Activated CD8-positive, alpha-beta memory T cell treated with anti-CD3 and anti-CD28 coated beads, Interleukin-2, amount 10 ng/mL, durations not matched to agents 7 days and 5 days (primary cell): ENCODE measurements at regions of chr2 and their contacts with region 1.

Region 1: GRCh38 chr2:196076778-196077568 is 8.3 kb upstream of the DNAH7 start:
- DNase-seq: no peak
- ATAC-seq: peak; percentile 35
- H3K4me3 Mint-ChIP-seq: no peak overlapping the region
- H3K27ac Mint-ChIP-seq: no peak overlapping the region
- H3K4me1 Mint-ChIP-seq: peaks cover 34% of the 10 kb centered on the region
- H3K27me3 Mint-ChIP-seq: no peaks in the 10 kb centered on the region

Region 2: DNA sequence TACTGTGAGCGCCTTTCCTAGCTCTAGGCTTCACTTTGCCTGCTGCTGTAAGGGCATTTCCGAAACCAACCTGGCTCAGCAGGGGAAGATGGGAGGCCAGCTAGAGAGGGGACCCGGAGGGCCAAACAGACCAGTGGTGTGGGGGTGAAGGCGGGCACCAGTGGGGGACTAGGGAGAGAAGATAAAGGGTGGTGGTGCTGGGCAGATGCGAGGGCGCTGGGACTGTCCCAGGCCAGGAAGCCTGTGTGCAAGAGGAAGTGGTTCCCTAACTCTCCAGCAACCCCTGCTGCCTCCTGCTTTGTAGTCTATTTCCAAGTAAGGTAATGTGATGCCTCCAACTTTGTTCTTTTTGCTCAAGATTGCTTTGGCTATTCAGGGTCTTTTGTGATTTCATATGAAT is 81.5 kb before region 1 on chr2:
- CTCF ChIA-PET with region 1: no interaction called
- DNase-seq: no peak
- ATAC-seq: no peak
- H3K4me3 Mint-ChIP-seq: no peak overlapping the region
- H3K27ac Mint-ChIP-seq: no peak overlapping the region
- H3K4me1 Mint-ChIP-seq: no peaks in the 10 kb centered on the region
- H3K27me3 Mint-ChIP-seq: peaks cover 3% of the 10 kb centered on the region

Region 3: GRCh38 chr2:196143730-196144131 is 66.8 kb after region 1 on chr2:
- CTCF ChIA-PET with region 1: interaction called, 11 read pairs
- DNase-seq: no peak
- ATAC-seq: peak; percentile 21
- H3K4me3 Mint-ChIP-seq: peak overlapping the region; percentile 11
- H3K27ac Mint-ChIP-seq: peak overlapping the region; percentile 71
- H3K4me1 Mint-ChIP-seq: peaks cover 61% of the 10 kb centered on the region
- H3K27me3 Mint-ChIP-seq: no peaks in the 10 kb centered on the region

Region 4: GRCh38 chr2:196268538-196269338 is 191.8 kb after region 1 on chr2:
- CTCF ChIA-PET with region 1: interaction called, 18 read pairs
- DNase-seq: no peak
- ATAC-seq: peak; percentile 46
- H3K4me3 Mint-ChIP-seq: peak overlapping the region; percentile 63
- H3K27ac Mint-ChIP-seq: peak overlapping the region; percentile 85
- H3K4me1 Mint-ChIP-seq: peaks cover 67% of the 10 kb centered on the region
- H3K27me3 Mint-ChIP-seq: no peaks in the 10 kb centered on the region

Region 5: DNA sequence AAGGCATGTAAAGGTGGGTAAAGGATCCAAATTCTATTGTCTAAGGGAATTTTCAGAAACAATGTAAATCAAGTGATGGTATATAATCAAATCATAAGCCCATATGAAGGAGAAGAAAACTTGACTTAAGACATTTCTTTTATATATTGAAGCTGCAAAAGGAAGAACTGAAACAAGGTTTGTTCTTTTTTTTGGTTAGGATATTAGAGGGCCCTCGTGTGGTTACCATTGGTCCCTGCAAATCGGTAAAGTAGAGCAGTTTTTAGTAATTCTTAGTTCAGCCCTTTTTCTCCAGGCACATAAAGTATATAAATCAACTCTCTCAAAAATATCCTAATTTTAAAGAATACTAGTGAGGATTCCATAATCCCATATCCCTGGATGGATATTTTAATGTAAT is 200.0 kb after region 1 on chr2:
- CTCF ChIA-PET with region 1: interaction called, 26 read pairs
- DNase-seq: no peak
- ATAC-seq: peak; percentile 31
- H3K4me3 Mint-ChIP-seq: peak overlapping the region; percentile 11
- H3K27ac Mint-ChIP-seq: peak overlapping the region; percentile 52
- H3K4me1 Mint-ChIP-seq: peaks cover 42% of the 10 kb centered on the region
- H3K27me3 Mint-ChIP-seq: no peaks in the 10 kb centered on the region

Region 6: GRCh38 chr2:196291873-196292800 is 215.2 kb after region 1 on chr2:
- CTCF ChIA-PET with region 1: interaction called, 18 read pairs
- DNase-seq: no peak
- ATAC-seq: peak; percentile 34
- H3K4me3 Mint-ChIP-seq: no peak overlapping the region
- H3K27ac Mint-ChIP-seq: peak overlapping the region; percentile 29
- H3K4me1 Mint-ChIP-seq: peaks cover 55% of the 10 kb centered on the region
- H3K27me3 Mint-ChIP-seq: no peaks in the 10 kb centered on the region

Region 7: DNA sequence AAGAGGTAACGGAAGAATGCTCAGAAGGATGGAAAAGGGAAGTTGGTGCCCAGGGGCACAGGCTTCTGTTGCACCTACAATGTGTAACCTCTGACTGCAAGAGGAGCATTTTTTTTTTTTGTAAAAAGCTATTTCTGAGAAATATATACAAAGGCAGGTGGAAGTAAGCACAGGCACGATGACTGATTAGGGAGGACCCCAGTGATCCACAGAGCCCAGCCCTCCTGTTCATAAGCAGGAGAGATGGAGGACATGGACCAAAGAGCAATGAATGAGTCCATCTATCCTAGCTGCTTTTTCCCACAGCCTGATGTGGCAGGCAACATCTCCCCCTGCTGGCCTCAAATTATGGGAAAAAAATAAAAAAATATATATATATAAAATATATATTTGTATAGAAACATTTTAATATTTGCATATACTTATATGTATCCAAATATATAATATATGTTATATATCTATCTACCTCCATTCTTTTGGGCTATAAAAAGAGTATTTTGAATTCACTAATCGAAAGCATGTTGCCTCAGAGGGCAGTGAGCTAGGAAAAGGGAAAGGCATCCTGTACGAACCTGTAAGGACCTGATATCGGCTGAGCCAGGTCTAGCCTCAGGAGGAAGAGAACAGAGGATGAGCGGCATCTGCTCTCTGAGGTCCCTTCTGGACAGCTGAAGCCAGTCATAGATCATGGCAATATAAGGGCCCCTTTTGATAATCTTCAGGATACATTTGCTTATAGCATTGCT is 260.4 kb after region 1 on chr2:
- CTCF ChIA-PET with region 1: interaction called, 82 read pairs
- DNase-seq: no peak
- ATAC-seq: no peak
- H3K4me3 Mint-ChIP-seq: no peak overlapping the region
- H3K27ac Mint-ChIP-seq: no peak overlapping the region
- H3K4me1 Mint-ChIP-seq: peaks cover 9% of the 10 kb centered on the region
- H3K27me3 Mint-ChIP-seq: peaks cover 6% of the 10 kb centered on the region

Region 8: DNA sequence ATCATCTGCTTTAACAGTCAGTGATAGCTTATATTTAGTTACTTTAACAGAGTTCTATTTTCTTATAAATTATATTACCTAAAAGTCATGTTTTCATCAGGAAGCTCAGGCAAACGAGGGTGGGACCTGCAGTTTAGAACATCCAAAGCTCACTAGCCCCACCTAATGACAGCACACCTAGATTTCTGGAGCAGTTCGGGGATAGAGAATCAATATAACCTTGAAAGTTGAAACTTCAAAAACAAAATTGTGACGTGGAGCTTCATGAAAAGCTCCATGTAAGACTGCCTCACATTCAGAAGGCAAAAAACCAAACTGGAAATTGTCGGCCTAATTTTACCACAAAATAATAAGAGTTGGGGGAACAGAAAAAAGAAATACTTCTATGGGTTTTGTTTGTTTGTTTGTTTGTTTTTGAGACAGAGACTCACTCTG is 376.7 kb after region 1 on chr2:
- CTCF ChIA-PET with region 1: interaction called, 44 read pairs
- DNase-seq: peak; percentile 60
- ATAC-seq: peak; percentile 47
- H3K4me3 Mint-ChIP-seq: no peak overlapping the region
- H3K27ac Mint-ChIP-seq: no peak overlapping the region
- H3K4me1 Mint-ChIP-seq: peaks cover 4% of the 10 kb centered on the region
- H3K27me3 Mint-ChIP-seq: peaks cover 39% of the 10 kb centered on the region